Activated naive CD4-positive, alpha-beta T cell treated with anti-CD3 and anti-CD28 coated beads, Interleukin-2, amount 10 ng/mL, durations not matched to agents 7 days and 5 days (primary cell): ENCODE measurements at regions of chr5 and their contacts with region 1.

Region 1: DNA sequence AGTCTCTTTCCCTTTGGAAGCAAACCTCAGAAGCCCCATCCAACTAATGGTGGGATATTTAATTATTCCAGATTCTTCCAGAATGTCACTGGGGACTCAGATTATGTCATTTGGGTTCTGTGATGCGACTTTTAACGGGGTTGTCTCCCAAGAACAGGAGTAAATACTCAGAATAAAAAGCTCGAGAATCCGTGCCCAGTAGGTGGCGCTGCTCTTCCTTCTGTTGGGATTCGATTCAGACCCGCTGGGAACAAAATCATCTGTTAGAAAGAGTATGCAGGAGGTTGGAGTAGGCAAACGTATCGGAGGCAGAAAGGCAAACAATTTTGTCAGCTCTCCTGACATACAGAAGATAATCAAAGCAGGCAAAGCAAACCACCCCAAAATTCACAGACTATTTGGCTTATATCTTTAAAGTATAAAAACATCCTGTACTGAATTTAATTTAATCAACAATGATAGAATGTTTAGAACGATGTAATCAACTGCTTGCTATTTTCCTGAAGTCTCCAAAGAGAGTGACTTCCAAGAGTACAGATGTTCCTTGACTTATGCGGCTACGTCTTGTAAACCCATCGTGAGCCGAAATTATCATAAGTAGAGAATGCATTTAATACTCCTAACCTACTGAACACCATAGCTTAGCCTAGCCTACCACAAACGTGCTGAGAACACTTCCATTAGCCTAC is 169.8 kb upstream of the RAI14 start:
- DNase-seq: peak; percentile 72
- H3K4me3 Mint-ChIP-seq: no peak overlapping the region
- H3K27ac Mint-ChIP-seq: no peak overlapping the region
- H3K4me1 Mint-ChIP-seq: no peaks in the 10 kb centered on the region
- H3K27me3 Mint-ChIP-seq: peaks cover 48% of the 10 kb centered on the region

Region 2: GRCh38 chr5:34474573-34475021 is 11.7 kb before region 1 on chr5:
- CTCF ChIA-PET with region 1: interaction called, 34 read pairs
- DNase-seq: no peak
- H3K4me3 Mint-ChIP-seq: no peak overlapping the region
- H3K27ac Mint-ChIP-seq: no peak overlapping the region
- H3K4me1 Mint-ChIP-seq: no peaks in the 10 kb centered on the region
- H3K27me3 Mint-ChIP-seq: peaks cover 9% of the 10 kb centered on the region

Region 3: GRCh38 chr5:34499001-34499734 is 12.9 kb after region 1 on chr5:
- CTCF ChIA-PET with region 1: interaction called, 15 read pairs
- DNase-seq: no peak
- H3K4me3 Mint-ChIP-seq: no peak overlapping the region
- H3K27ac Mint-ChIP-seq: no peak overlapping the region
- H3K4me1 Mint-ChIP-seq: peaks cover 7% of the 10 kb centered on the region
- H3K27me3 Mint-ChIP-seq: peaks cover 9% of the 10 kb centered on the region

Region 4: GRCh38 chr5:34522599-34523386 is 36.5 kb after region 1 on chr5:
- CTCF ChIA-PET with region 1: interaction called, 12 read pairs
- DNase-seq: peak; percentile 65
- H3K4me3 Mint-ChIP-seq: no peak overlapping the region
- H3K27ac Mint-ChIP-seq: no peak overlapping the region
- H3K4me1 Mint-ChIP-seq: no peaks in the 10 kb centered on the region
- H3K27me3 Mint-ChIP-seq: no peaks in the 10 kb centered on the region

Region 5: DNA sequence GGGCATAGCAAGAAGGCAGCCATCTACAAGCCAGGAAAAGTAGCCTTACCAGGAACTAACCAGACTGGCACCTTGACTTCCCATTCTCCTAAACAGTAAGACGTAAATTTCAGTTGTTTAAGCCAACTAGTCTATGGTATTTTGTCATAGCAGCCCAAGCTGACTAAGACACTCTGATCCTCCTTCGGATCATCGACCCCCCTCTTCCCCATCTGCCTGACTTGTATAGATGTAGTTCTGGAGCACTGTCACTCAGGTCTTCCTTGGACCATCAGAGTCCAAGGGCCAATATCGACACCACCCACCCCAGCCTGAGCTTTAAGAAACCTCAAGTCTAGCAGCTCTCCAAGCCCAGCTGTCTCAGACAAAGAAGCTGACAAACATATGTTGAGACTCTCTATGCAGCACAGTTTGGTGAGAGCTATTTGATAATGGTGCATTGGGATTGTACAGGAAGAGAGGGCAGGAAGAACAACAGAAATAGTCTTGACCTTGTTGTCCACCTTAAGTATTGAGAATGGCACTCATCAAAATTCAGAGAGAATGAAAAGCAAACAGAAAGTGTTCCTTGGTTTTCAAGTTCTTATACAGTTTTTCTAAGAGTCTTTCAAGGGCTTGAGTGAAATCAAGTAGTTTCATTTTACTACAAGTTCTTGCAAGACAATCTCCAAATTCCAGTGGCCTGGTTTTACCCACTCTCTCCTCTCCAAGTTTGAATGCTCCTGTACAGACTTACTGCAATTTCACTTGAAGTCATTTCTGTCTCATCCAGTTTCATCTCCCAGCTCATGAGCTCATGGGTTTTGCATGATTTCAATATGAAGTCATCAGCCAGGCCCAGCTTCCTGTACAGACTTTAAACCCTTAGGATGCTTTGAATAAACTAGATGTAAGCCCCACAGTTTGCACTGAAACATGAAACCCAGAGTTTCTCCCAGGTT is 47.5 kb after region 1 on chr5:
- CTCF ChIA-PET with region 1: interaction called, 17 read pairs
- DNase-seq: no peak
- H3K4me3 Mint-ChIP-seq: no peak overlapping the region
- H3K27ac Mint-ChIP-seq: no peak overlapping the region
- H3K4me1 Mint-ChIP-seq: no peaks in the 10 kb centered on the region
- H3K27me3 Mint-ChIP-seq: no peaks in the 10 kb centered on the region

Region 6: GRCh38 chr5:34621277-34622097 is 135.2 kb after region 1 on chr5:
- CTCF ChIA-PET with region 1: no interaction called
- DNase-seq: no peak
- H3K4me3 Mint-ChIP-seq: no peak overlapping the region
- H3K27ac Mint-ChIP-seq: no peak overlapping the region
- H3K4me1 Mint-ChIP-seq: no peaks in the 10 kb centered on the region
- H3K27me3 Mint-ChIP-seq: no peaks in the 10 kb centered on the region

Region 7: GRCh38 chr5:34898258-34898895 is 412.1 kb after region 1 on chr5:
- CTCF ChIA-PET with region 1: interaction called, 27 read pairs
- DNase-seq: peak; percentile 71
- H3K4me3 Mint-ChIP-seq: no peak overlapping the region
- H3K27ac Mint-ChIP-seq: no peak overlapping the region
- H3K4me1 Mint-ChIP-seq: no peaks in the 10 kb centered on the region
- H3K27me3 Mint-ChIP-seq: no peaks in the 10 kb centered on the region